Activated naive CD4-positive, alpha-beta T cell treated with anti-CD3 and anti-CD28 coated beads for 36 hours (primary cell): ENCODE measurements at regions of chr20 and their contacts with region 1.

Region 1: GRCh38 chr20:20083807-20084206 is 31.5 kb downstream of the CFAP61 start:
- DNase-seq: no peak
- H3K4me3 Mint-ChIP-seq: no peak overlapping the region
- H3K27ac Mint-ChIP-seq: no peak overlapping the region
- H3K4me1 Mint-ChIP-seq: peaks cover 2% of the 10 kb centered on the region
- H3K27me3 Mint-ChIP-seq: peaks cover 14% of the 10 kb centered on the region

Region 2: DNA sequence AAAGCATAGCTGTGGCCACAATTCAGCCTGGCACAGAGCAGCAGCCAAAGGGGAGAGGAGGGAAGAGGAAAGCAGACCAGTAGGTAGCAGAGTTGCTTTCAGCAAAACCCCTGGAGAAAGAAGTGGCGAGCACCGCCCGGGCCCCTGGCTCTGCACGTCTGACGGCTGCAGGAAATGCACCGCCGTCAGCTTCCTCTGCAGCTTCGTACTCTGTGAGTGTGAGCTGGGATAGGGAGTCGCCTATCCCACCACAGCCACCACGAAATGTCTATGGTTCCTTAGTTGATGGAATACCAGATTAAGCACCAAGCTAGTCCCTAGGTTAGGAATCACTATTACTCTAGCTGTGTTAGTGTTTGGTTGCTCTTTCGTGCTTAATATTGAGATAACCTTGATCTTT is 146.6 kb before region 1 on chr20:
- CTCF ChIA-PET with region 1: no interaction called
- intact Hi-C with region 1: no loop called
- DNase-seq: peak; percentile 40
- H3K4me3 Mint-ChIP-seq: no peak overlapping the region
- H3K27ac Mint-ChIP-seq: no peak overlapping the region
- H3K4me1 Mint-ChIP-seq: peaks cover 17% of the 10 kb centered on the region
- H3K27me3 Mint-ChIP-seq: peaks cover 12% of the 10 kb centered on the region

Region 3: GRCh38 chr20:20237093-20237959 is 153.5 kb after region 1 on chr20:
- CTCF ChIA-PET with region 1: interaction called, 24 read pairs
- intact Hi-C with region 1: loop called (anchors 1 kb)
- DNase-seq: peak; percentile 45
- H3K4me3 Mint-ChIP-seq: no peak overlapping the region
- H3K27ac Mint-ChIP-seq: no peak overlapping the region
- H3K4me1 Mint-ChIP-seq: no peaks in the 10 kb centered on the region
- H3K27me3 Mint-ChIP-seq: no peaks in the 10 kb centered on the region

Region 4: GRCh38 chr20:20568604-20569205 is 484.9 kb after region 1 on chr20:
- CTCF ChIA-PET with region 1: interaction called, 4 read pairs
- intact Hi-C with region 1: loop called (anchors 1 kb)
- DNase-seq: peak; percentile 54
- H3K4me3 Mint-ChIP-seq: no peak overlapping the region
- H3K27ac Mint-ChIP-seq: no peak overlapping the region
- H3K4me1 Mint-ChIP-seq: no peaks in the 10 kb centered on the region
- H3K27me3 Mint-ChIP-seq: no peaks in the 10 kb centered on the region

Region 5: GRCh38 chr20:20593447-20594170 is 509.8 kb after region 1 on chr20:
- CTCF ChIA-PET with region 1: interaction called, 4 read pairs
- intact Hi-C with region 1: loop called (anchors 1 kb)
- DNase-seq: peak; percentile 30
- H3K4me3 Mint-ChIP-seq: no peak overlapping the region
- H3K27ac Mint-ChIP-seq: no peak overlapping the region
- H3K4me1 Mint-ChIP-seq: no peaks in the 10 kb centered on the region
- H3K27me3 Mint-ChIP-seq: no peaks in the 10 kb centered on the region